ENCODE measurements at regions of chr18 and their contacts with region 1.

Region 1: GRCh38 chr18:658001-658946 is 821 bp downstream of the TYMS start:
- DNase-seq: no peak
- ATAC-seq: peak; percentile 68
- H3K4me3 Mint-ChIP-seq: peak overlapping the region; percentile 87
- H3K27ac Mint-ChIP-seq: no peak overlapping the region
- H3K4me1 Mint-ChIP-seq: peaks cover 17% of the 10 kb centered on the region
- H3K27me3 Mint-ChIP-seq: peaks cover 20% of the 10 kb centered on the region
- CTCF ChIP-seq: no peak

Region 2: DNA sequence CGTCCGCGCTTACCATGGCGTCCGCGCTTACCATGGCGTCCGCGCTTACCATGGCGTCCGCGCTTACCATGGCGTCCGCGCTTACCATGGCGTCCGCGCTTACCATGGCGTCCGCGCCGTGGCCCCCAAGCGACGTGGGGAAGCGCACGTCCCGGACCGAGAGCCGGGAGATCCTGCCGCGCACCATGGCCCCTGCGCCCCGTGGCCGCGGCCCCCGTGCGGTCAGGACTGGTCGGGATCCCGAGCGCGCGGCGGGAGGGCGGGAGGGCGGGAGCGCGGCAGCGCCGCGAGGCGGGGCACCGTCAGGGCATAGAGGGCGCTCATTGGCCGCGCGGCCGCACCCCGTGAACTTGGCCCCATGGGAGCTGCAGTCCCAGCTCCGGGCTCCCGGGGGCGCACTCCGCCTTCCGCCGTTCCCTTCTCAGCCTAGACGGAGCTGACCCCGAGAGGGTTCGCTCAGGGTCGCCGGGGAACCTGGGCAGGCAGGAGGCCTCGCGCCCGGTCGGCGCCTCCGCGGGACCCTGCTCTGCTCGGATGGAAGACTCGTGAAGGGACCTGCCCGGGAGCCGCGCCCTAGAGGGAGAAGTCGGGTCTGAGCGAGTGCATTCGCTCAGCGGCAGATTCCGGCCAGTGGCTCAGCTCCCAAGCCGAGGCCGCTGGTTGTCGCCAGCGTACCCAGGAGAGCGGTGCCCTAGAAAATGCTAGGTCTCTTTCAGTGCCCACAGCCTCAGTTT is 54.3 kb after region 1 on chr18 and contains the start of gene ENOSF1:
- CTCF ChIA-PET with region 1: no interaction called
- POLR2A ChIA-PET with region 1: interaction called, 3 read pairs
- intact Hi-C with region 1: loop called (anchors 1 kb)
- DNase-seq: peak; percentile 62
- ATAC-seq: peak; percentile 91
- H3K4me3 Mint-ChIP-seq: peak within 1 kb of the TSS; percentile 84
- H3K27ac Mint-ChIP-seq: peak within 1 kb of the TSS; percentile 13
- H3K4me1 Mint-ChIP-seq: peaks cover 7% of the 10 kb centered on the region
- H3K27me3 Mint-ChIP-seq: peaks cover 4% of the 10 kb centered on the region
- CTCF ChIP-seq: no peak
- total RNA-seq, gene ENOSF1: 21.3 and 23.8 TPM in 2 replicates

Region 3: DNA sequence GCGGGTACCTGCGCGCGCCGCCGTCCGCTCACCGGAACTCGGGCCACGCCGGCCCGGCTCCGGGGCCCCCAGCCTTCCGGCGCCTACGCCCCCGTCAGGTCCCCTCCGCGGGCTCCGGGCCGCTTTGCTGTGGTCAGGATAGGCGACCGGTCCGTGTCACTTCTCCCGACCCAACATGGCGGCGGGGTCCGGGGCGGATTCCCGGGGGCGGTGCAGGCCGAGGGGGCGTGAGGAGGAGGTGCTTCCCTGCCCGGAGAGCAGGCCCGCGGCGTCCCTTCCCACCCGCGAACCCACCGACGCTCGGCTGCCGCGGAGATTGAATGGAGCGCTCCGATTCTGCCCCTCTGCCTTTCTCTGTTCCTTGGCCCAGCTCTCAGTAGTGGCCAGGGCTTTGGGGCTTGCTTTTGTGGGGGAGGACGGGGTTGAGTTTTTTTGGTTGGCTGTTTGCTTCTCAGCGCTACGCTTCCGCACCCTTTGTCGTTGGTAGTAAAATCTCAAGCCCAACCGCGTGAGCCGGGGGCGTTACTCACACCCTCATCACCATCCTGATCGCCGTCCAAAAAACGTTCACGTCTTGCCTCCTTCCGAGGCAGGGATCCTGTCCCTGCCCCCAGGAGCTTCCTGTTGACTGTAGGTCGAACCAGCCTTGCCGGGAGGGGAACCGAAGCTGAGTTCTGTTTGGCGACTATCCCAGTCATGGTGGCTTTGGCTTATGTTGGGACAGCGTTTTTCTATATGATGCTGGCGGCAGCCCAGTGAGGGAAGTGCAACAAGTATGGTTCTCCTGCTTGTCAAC is 154.3 kb after region 1 on chr18:
- CTCF ChIA-PET with region 1: no interaction called
- POLR2A ChIA-PET with region 1: no interaction called
- intact Hi-C with region 1: loop called (anchors 5 kb)
- DNase-seq: peak; percentile 26
- ATAC-seq: peak; percentile 59
- H3K4me3 Mint-ChIP-seq: peak overlapping the region; percentile 80
- H3K27ac Mint-ChIP-seq: peak overlapping the region; percentile 76
- H3K4me1 Mint-ChIP-seq: peaks cover 19% of the 10 kb centered on the region
- H3K27me3 Mint-ChIP-seq: peaks cover 60% of the 10 kb centered on the region
- CTCF ChIP-seq: no peak

Measured in activated B cell treated with CpG ODN at 0.5 μM for 24 hours (primary cell).